ENCODE measurements at regions of chr5 and their contacts with region 1.

Region 1: DNA sequence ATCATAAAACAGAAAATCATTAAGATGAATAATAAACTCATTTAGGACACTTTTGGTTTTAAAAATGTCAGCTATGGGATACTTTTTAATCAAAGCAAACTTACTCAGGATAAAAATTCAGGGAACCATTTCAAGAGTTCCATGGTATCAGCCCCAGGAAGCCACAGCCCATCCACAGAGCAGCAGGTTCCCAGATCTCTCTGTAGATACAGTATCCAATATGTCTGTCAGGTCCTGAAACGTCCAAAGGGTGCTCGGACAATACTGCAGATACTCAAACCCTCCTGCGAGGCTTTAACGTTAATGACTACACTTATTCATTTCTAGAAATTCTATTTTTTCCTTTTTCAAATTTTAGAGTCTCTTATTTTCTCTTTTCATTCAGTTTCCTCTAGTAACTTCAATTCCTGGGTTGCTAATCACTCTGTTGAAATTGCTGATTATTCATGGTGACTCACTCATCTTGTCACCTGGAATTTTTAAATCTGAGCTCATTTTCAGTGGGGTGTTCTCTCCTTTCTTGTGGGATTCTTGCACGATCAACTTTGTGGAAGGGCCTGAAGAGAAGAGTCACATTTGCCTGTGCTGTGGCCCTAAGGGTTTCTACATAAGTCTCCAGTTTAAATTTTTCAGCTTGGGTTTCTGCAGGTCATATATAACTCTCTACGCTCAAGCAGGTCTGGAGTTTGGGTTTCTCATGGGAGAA is 435.8 kb downstream of the CTNND2 start:
- DNase-seq: no peak
- ATAC-seq: no peak
- H3K4me3 ChIP-seq: no peak overlapping the region
- H3K27ac ChIP-seq: no peak overlapping the region
- H3K4me1 ChIP-seq: no peaks in the 10 kb centered on the region
- H3K27me3 ChIP-seq: no peaks in the 10 kb centered on the region
- CTCF ChIP-seq: no peak
- POLR2A ChIP-seq: no peak
- RAD21 ChIP-seq: no peak

Region 2: GRCh38 chr5:10746711-10747110 is 721.8 kb before region 1 on chr5:
- CTCF ChIA-PET with region 1: no interaction called
- POLR2A ChIA-PET with region 1: no interaction called
- dilution Hi-C with region 1: no loop called
- in situ Hi-C with region 1: no loop called
- intact Hi-C with region 1: loop called (anchors 5 kb)
- DNase-seq: no peak
- ATAC-seq: no peak
- H3K4me3 ChIP-seq: no peak overlapping the region
- H3K27ac ChIP-seq: no peak overlapping the region
- H3K4me1 ChIP-seq: peaks cover 5% of the 10 kb centered on the region; the same call in 1 of the 2 replicates
- H3K27me3 ChIP-seq: no peaks in the 10 kb centered on the region
- CTCF ChIP-seq: no peak
- POLR2A ChIP-seq: no peak
- RAD21 ChIP-seq: no peak

Region 3: GRCh38 chr5:11311272-11311671 is 157.2 kb before region 1 on chr5:
- CTCF ChIA-PET with region 1: no interaction called
- POLR2A ChIA-PET with region 1: no interaction called
- dilution Hi-C with region 1: no loop called
- in situ Hi-C with region 1: no loop called
- intact Hi-C with region 1: no loop called
- DNase-seq: no peak
- ATAC-seq: no peak
- H3K4me3 ChIP-seq: no peak overlapping the region
- H3K27ac ChIP-seq: no peak overlapping the region
- H3K4me1 ChIP-seq: no peaks in the 10 kb centered on the region
- H3K27me3 ChIP-seq: no peaks in the 10 kb centered on the region
- CTCF ChIP-seq: no peak
- POLR2A ChIP-seq: no peak
- RAD21 ChIP-seq: no peak

Region 4: DNA sequence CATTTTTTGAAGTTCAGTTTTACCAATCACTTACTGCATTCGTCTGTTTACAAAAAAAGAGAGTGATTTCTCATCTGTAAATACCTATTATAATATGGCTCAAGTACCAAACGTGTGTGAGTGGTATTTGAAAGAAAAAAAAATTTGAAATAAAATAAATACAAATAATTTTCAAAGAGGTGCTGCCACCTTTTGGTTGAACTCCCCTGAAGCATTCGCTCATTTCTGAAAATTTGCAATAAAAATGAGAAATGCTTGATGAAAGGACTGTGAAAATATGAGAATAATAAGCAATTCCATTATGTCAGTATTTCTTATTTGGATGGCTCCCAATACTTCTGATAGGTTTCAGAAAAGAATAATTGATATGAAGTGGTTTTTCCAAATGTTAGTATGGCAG is 25.9 kb after region 1 on chr5:
- CTCF ChIA-PET with region 1: no interaction called
- POLR2A ChIA-PET with region 1: no interaction called
- dilution Hi-C with region 1: no loop called
- in situ Hi-C with region 1: no loop called
- intact Hi-C with region 1: no loop called
- DNase-seq: no peak
- ATAC-seq: no peak
- H3K4me3 ChIP-seq: no peak overlapping the region
- H3K27ac ChIP-seq: no peak overlapping the region
- H3K4me1 ChIP-seq: no peaks in the 10 kb centered on the region
- H3K27me3 ChIP-seq: no peaks in the 10 kb centered on the region
- CTCF ChIP-seq: peak; percentile 45
- POLR2A ChIP-seq: no peak
- RAD21 ChIP-seq: peak; percentile 17; the same call in 1 of the 2 replicates

Region 5: DNA sequence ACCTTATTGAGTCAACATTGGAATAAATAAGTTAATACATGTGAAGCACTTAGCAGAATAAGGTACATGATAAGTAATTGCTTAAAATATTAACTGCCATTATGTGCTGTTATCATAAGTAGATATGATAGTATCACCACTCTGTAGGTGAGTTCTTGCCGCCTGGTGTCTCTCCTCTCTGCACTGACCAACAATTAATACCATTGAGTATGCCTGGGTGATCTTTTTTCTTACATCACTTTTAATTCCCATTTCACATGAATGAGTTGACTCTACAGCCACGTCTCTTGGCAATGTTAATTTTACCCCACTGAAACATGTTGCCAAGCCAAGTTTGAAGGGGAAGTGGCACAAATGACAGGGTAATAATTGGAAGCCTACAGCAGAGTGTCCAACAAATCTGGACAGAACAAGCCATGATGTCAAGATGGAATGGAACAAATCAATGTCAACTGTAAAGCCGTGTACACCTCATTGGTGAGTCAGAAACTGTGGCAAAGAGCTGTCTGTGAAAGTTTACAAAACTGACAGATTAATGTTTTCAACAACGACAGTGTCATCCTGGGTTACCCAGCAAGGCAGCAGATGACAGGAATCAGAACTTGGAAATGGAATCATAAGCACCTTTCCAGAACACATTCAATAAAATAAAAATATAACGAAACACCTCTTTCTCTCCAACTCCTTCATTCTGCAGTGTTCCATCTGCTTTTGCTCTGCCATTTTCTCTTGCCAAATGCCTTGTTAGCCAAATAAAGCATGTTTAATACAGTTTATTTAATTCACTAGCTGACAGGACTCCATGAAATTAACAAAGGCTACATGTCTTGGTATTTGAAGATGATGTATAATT is 104.9 kb after region 1 on chr5:
- CTCF ChIA-PET with region 1: no interaction called
- POLR2A ChIA-PET with region 1: no interaction called
- dilution Hi-C with region 1: no loop called
- in situ Hi-C with region 1: no loop called
- intact Hi-C with region 1: no loop called
- DNase-seq: no peak
- ATAC-seq: no peak
- H3K4me3 ChIP-seq: no peak overlapping the region
- H3K27ac ChIP-seq: no peak overlapping the region
- H3K4me1 ChIP-seq: no peaks in the 10 kb centered on the region
- H3K27me3 ChIP-seq: no peaks in the 10 kb centered on the region
- CTCF ChIP-seq: no peak
- POLR2A ChIP-seq: no peak
- RAD21 ChIP-seq: no peak

Measured in IMR-90 (cell line).